Uterus (tissue), 4 donors: ENCODE measurements at regions of chr7 and their contacts with region 1.

Region 1: GRCh38 chr7:151143261-151144015 is 24.1 kb downstream of the GBX1 start:
- DNase-seq: peak; percentile 14
- H3K4me3 ChIP-seq: no peak overlapping the region
- H3K27ac ChIP-seq: no peak overlapping the region
- H3K4me1 ChIP-seq: no peaks in the 10 kb centered on the region
- H3K27me3 ChIP-seq: no peaks in the 10 kb centered on the region
- CTCF ChIP-seq: no peak
- POLR2A ChIP-seq: no peak

Region 2: GRCh38 chr7:151198945-151199848 is 55.8 kb after region 1 on chr7:
- intact Hi-C with region 1: loop called (anchors 10 kb)
- DNase-seq: peak in 1 of 2 donors; percentile 48
- H3K4me3 ChIP-seq: no peak overlapping the region
- H3K27ac ChIP-seq: no peak overlapping the region
- H3K4me1 ChIP-seq: peaks cover 0 to 7% of the 10 kb centered on the region in 2 donors
- H3K27me3 ChIP-seq: no peaks in the 10 kb centered on the region
- CTCF ChIP-seq: no peak
- POLR2A ChIP-seq: no peak